K562 (cell line): ENCODE measurements at regions of chr6 and their contacts with region 1.

Region 1: DNA sequence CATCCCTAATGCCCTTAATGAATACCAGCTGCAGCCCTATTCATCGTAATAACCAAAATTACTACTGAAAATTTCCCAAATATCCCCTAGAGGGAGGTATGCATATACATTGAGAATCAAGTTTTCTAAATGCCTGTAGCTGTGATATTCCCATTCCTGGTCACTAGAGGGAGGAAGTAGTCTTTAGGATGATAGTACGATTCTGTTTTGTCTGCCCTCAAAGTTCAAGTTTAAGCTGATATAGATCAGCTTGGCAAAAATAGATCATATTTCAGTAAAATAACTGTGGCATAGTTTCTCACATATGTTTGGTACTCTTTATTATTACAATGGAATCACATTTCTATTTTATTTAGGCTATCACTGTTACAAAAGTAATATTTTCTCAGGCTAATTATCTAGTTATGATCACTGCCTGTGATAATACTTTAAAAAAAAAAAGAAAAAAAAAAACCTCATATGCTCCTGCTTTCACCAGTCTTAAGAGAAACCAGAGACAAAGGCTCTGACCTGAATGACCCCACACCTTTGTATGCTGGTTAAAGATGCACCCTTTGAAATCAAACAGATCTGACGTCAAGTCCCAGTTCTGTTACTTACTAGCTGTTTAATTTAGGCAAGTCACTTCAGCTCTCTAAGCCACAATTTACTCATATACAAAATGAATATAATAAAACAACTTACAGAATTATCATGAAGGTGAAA is 11.0 kb downstream of the TSPYL1 start:
- DNase-seq: peak; percentile 59 to 76 (median 68)
- ATAC-seq: peak; percentile 92
- H3K4me3 ChIP-seq: no peak overlapping the region
- H3K27ac ChIP-seq: no peak overlapping the region
- H3K4me1 ChIP-seq: no peaks in the 10 kb centered on the region; a peak in 1 of 5 replicates
- H3K27me3 ChIP-seq: no peaks in the 10 kb centered on the region
- CTCF ChIP-seq: peak; percentile 88 to 99 (median 97)
- EP300 ChIP-seq: no peak
- POLR2A ChIP-seq: no peak
- RAD21 ChIP-seq: peak; percentile 96 to 97

Region 2: GRCh38 chr6:115753446-115753845 is 515.3 kb before region 1 on chr6:
- CTCF ChIA-PET with region 1: no interaction called
- POLR2A ChIA-PET with region 1: no interaction called
- in situ Hi-C with region 1: no loop called
- intact Hi-C with region 1: no loop called
- DNase-seq: no peak
- ATAC-seq: no peak
- H3K4me3 ChIP-seq: no peak overlapping the region
- H3K27ac ChIP-seq: no peak overlapping the region
- H3K4me1 ChIP-seq: no peaks in the 10 kb centered on the region
- H3K27me3 ChIP-seq: no peaks in the 10 kb centered on the region
- CTCF ChIP-seq: no peak
- EP300 ChIP-seq: no peak
- POLR2A ChIP-seq: no peak
- RAD21 ChIP-seq: no peak

Region 3: DNA sequence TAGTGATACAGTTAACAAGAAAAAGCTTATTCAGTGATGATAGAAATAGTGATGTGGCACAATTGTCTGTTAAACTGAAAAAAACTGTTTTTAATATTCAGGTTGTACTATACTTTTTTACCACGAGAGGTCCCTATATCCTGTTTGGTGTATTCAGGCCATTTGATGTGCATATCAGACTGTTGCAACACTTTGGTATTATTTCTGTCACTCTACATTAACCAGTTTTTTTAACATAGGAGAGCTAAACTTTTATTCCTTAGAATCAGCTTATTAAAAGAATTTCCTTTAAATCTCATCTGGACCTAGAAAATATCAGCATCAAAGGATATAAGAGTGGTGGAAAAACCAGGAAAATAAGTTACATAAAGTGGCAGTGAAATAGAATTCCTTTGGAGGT is 51.7 kb before region 1 on chr6:
- CTCF ChIA-PET with region 1: interaction called, 3 read pairs
- POLR2A ChIA-PET with region 1: no interaction called
- in situ Hi-C with region 1: no loop called
- intact Hi-C with region 1: loop called (anchors 2 kb)
- DNase-seq: peak; percentile 21 to 51 (median 27)
- ATAC-seq: peak; percentile 81
- H3K4me3 ChIP-seq: no peak overlapping the region
- H3K27ac ChIP-seq: no peak overlapping the region
- H3K4me1 ChIP-seq: peaks cover 0 to 3% of the 10 kb centered on the region in 2 experiments; a peak in 2 of 5 replicates
- H3K27me3 ChIP-seq: no peaks in the 10 kb centered on the region
- CTCF ChIP-seq: peak; percentile 46 to 70 (median 52); a peak in 4 of 6 replicates
- EP300 ChIP-seq: no peak
- POLR2A ChIP-seq: no peak
- RAD21 ChIP-seq: peak; percentile 43 to 61

Region 4: DNA sequence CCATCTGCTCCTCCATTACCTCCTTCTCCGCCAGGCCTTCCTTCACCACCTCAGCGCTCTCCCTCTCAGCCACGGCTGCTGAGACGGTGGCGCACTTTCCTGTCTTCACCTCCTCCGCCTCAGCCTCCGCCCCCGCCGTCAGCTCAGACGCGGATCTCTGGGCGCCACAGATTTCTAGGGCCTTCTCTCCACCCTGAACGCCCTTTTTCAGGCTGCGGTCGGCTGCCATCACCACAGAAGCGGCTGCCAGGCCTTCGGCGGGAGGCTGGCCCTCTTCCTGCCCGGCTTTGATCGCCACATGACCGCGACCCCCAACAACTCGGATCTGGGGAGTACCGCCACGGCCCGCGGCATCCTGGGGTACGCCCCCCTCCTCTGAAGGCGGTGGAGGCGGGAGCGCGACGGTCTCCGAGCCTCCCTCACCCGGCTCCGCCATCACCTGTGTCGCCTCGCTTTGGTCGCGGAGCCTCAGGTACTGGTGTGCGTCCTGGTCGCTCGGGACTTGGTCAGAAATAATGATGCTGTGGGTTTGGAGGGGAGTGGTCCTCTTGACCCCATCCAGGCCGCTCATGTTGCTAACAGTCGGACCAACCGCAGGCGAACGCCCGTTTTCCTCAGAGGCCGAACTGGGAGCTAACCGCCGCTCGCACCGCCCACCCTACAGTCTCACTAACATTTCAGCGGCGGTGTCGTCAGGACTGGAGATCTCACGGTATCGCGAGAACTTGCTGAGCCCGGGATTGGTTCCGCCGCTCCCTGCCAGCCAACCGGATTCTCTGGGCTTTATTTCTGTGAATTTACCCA is 10.7 kb after region 1 on chr6 and contains the start of gene TSPYL1:
- CTCF ChIA-PET with region 1: no interaction called
- POLR2A ChIA-PET with region 1: interaction called, 27 read pairs
- in situ Hi-C with region 1: no loop called
- intact Hi-C with region 1: no loop called
- DNase-seq: peak; percentile 90 to 97 (median 92)
- ATAC-seq: peak; percentile 85
- H3K4me3 ChIP-seq: peak within 1 kb of the TSS; percentile 93
- H3K27ac ChIP-seq: peak within 1 kb of the TSS; percentile 95
- H3K4me1 ChIP-seq: peaks cover 9 to 20% of the 10 kb centered on the region in 2 experiments; a peak in 3 of 5 replicates
- H3K27me3 ChIP-seq: no peaks in the 10 kb centered on the region
- CTCF ChIP-seq: peak in 1 of 3 experiments; percentile 27; a peak in 2 of 6 replicates
- EP300 ChIP-seq: no peak; the same call in 1 of the 2 replicates
- POLR2A ChIP-seq: peak; percentile 95
- RAD21 ChIP-seq: no peak
- polyA plus RNA-seq, gene TSPYL1: 26.1 to 37.9 TPM

Region 5: GRCh38 chr6:116531675-116532570 is 263.2 kb after region 1 on chr6:
- CTCF ChIA-PET with region 1: interaction called, 22 read pairs
- POLR2A ChIA-PET with region 1: no interaction called
- in situ Hi-C with region 1: loop called (anchors 10 kb)
- intact Hi-C with region 1: loop called (anchors 1 kb)
- DNase-seq: peak; percentile 63 to 78 (median 66)
- ATAC-seq: peak; percentile 88
- H3K4me3 ChIP-seq: no peak overlapping the region
- H3K27ac ChIP-seq: no peak overlapping the region
- H3K4me1 ChIP-seq: peaks cover 0 to 2% of the 10 kb centered on the region in 2 experiments; a peak in 1 of 5 replicates
- H3K27me3 ChIP-seq: peaks cover 0 to 4% of the 10 kb centered on the region in 2 experiments; a peak in 2 of 5 replicates
- CTCF ChIP-seq: peak; percentile 79 to 86 (median 84)
- EP300 ChIP-seq: no peak
- POLR2A ChIP-seq: no peak
- RAD21 ChIP-seq: peak; percentile 64 to 88

Region 6: GRCh38 chr6:116648156-116648555 is 379.4 kb after region 1 on chr6:
- CTCF ChIA-PET with region 1: interaction called, 13 read pairs
- POLR2A ChIA-PET with region 1: no interaction called
- in situ Hi-C with region 1: no loop called
- intact Hi-C with region 1: loop called (anchors 5 kb)
- DNase-seq: no peak
- ATAC-seq: no peak
- H3K4me3 ChIP-seq: no peak overlapping the region
- H3K27ac ChIP-seq: no peak overlapping the region
- H3K4me1 ChIP-seq: no peaks in the 10 kb centered on the region
- H3K27me3 ChIP-seq: no peaks in the 10 kb centered on the region
- CTCF ChIP-seq: no peak
- EP300 ChIP-seq: no peak
- POLR2A ChIP-seq: no peak
- RAD21 ChIP-seq: no peak

Region 7: DNA sequence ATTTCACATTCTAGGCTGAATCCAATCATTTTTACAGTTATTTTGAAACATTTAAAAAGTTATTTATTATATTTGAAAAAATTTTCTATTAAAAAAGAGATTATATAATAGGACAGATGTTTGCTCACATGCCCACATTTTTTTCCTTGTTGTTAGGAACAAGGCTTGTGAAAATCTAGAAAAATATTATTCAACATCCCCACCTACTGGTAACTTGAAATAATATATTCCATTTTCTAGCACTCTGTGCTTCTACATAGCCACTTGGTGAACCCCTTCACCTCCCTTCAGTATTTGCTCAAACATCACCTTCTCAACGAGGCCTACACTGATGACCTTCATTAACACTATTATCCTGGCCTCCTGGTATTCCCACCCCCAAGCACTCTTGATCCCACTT is 578.5 kb after region 1 on chr6:
- CTCF ChIA-PET with region 1: interaction called, 3 read pairs
- POLR2A ChIA-PET with region 1: no interaction called
- in situ Hi-C with region 1: no loop called
- intact Hi-C with region 1: loop called (anchors 1 kb)
- DNase-seq: peak in 2 of 4 experiments; percentile 17 to 38
- ATAC-seq: peak; percentile 90
- H3K4me3 ChIP-seq: no peak overlapping the region
- H3K27ac ChIP-seq: no peak overlapping the region
- H3K4me1 ChIP-seq: no peaks in the 10 kb centered on the region
- H3K27me3 ChIP-seq: no peaks in the 10 kb centered on the region
- CTCF ChIP-seq: peak; percentile 28 to 67 (median 33); a peak in 3 of 6 replicates
- EP300 ChIP-seq: no peak
- POLR2A ChIP-seq: no peak
- RAD21 ChIP-seq: peak; percentile 59 to 62